ENCODE measurements at regions of chr17 and their contacts with region 1.

Region 1: DNA sequence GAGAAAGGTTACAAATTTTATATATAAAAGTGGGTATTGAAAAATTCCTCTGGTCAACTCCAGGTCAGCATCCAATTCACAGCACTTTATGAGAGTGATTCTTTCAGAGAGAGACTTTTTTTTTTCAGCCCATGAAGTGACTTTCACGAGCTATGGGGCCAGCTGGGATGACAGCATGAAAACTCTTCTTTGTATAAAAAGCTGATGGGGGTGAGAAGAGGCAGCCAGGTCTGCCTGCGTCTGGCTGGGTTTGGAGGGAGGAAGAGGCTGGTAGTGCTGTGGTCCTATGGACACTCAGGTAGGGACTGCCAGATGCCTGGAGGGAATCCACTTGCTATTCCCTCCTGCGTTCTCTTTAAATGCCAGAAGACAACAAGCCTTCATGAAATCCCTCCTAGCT is 250.6 kb downstream of the UTP18 start:
- DNase-seq: no peak
- H3K4me3 ChIP-seq: no peak overlapping the region
- CTCF ChIP-seq: no peak

Region 2: GRCh38 chr17:51445946-51446533 is 64.9 kb before region 1 on chr17:
- in situ Hi-C with region 1: no loop called
- DNase-seq: no peak
- H3K4me3 ChIP-seq: no peak overlapping the region
- CTCF ChIP-seq: no peak

Region 3: GRCh38 chr17:51555153-51555552 is 44.2 kb after region 1 on chr17:
- in situ Hi-C with region 1: no loop called
- DNase-seq: no peak
- H3K4me3 ChIP-seq: no peak overlapping the region
- CTCF ChIP-seq: no peak

Region 4: DNA sequence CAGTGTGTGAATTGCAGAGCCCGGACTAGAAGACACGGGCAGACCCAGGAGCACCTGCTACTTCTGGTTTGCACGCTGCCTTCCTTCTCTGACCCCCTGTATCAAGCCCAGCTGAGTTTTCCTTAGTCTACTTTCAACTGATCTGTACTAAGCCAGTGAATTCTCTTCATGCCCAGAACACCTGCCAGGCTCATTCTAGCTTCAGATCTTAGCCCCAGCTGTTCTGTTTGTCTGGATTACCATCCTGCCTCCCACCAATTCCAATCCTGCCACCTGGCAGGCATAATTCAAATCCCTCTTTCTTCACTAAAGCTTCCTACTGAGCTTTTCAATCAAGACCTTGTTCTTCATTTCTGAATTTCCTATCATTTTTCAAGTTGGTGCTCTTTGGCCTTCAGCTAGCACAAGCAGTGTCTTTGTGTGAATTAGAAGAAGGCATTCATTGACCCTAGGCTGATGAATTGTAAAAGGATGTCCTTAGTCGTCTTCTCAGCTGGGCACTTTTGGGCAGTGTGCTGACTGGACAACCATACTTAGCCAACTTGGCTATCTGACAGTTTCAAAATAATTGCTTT is 107.0 kb after region 1 on chr17:
- in situ Hi-C with region 1: loop called (anchors 5 kb)
- DNase-seq: no peak
- H3K4me3 ChIP-seq: no peak overlapping the region
- CTCF ChIP-seq: no peak